ENCODE measurements at regions of chr6 and their contacts with region 1.

Region 1: GRCh38 chr6:68975064-68975463 is 340.0 kb downstream of the ADGRB3 start:
- DNase-seq: no peak
- ATAC-seq: peak; percentile 82 to 88

Region 2: GRCh38 chr6:69719602-69720193 is 744.6 kb after region 1 on chr6:
- intact Hi-C with region 1: loop called in 1 of 2 experiments (anchors 10 kb)
- DNase-seq: no peak
- ATAC-seq: no peak

Measured in left cardiac atrium (tissue), 4 donors.